ENCODE measurements at regions of chr6 and their contacts with region 1.

Region 1: GRCh38 chr6:117761610-117762009 is 86.3 kb downstream of the NUS1 start:
- DNase-seq: no peak
- ATAC-seq: no peak
- H3K4me3 Mint-ChIP-seq: no peak overlapping the region
- H3K27ac Mint-ChIP-seq: no peak overlapping the region
- H3K4me1 Mint-ChIP-seq: no peaks in the 10 kb centered on the region
- H3K27me3 Mint-ChIP-seq: no peaks in the 10 kb centered on the region
- CTCF ChIP-seq: no peak

Region 2: DNA sequence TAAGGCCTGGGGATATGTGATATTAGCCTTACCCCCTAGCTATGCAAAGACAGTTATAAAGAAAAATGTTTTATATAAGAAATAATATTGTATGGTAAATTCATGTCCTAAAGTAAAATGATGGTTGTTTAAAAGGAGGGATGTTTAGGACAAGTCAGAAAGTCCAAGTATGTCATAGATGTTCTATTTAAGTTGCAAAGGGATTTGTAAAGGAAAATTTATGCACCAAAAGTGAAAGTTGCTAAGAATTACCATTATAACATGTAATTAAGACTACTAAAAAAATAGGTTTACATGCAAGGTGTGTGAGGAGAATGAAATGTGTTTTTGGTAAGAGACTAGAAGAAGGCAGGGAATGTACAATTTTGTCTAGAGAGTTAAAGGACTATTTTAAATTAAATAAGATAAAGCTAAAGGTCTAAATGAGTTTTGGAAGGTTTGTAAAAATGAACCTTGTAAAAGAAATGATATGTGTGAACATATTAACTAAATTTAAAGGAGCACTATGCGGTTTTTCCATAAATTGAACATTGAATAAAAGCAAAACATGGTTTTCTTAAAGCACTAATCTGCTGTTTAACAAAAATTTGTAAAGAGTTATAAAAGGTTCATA is 136.6 kb before region 1 on chr6:
- CTCF ChIA-PET with region 1: no interaction called
- POLR2A ChIA-PET with region 1: no interaction called
- intact Hi-C with region 1: no loop called
- DNase-seq: no peak
- ATAC-seq: no peak
- H3K4me3 Mint-ChIP-seq: no peak overlapping the region
- H3K27ac Mint-ChIP-seq: no peak overlapping the region
- H3K4me1 Mint-ChIP-seq: no peaks in the 10 kb centered on the region
- H3K27me3 Mint-ChIP-seq: peaks cover 9% of the 10 kb centered on the region
- CTCF ChIP-seq: no peak

Region 3: DNA sequence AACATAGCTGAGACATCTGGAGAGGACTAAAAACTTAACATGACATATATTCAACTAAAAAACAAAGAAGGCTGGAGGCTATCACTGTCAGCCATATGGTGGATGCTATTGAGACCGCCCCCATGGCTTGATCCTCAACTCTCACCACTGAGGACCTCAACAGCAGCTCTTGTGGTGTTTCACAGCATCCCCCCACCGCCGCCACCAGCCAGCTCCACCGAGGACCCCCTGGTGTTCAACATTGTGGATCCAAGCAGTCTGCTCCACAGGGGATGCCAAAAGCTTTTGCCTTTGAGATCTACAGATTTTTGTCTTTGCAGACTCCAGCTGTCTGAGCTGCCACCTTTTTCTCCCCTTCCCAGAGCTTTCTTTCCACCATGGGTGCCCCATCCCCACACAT is 21.7 kb before region 1 on chr6:
- CTCF ChIA-PET with region 1: no interaction called
- POLR2A ChIA-PET with region 1: interaction called, 11 read pairs
- intact Hi-C with region 1: no loop called
- DNase-seq: no peak
- ATAC-seq: no peak
- H3K4me3 Mint-ChIP-seq: no peak overlapping the region
- H3K27ac Mint-ChIP-seq: no peak overlapping the region
- H3K4me1 Mint-ChIP-seq: no peaks in the 10 kb centered on the region
- H3K27me3 Mint-ChIP-seq: no peaks in the 10 kb centered on the region
- CTCF ChIP-seq: no peak

Region 4: GRCh38 chr6:118029967-118030366 is 268.4 kb after region 1 on chr6:
- CTCF ChIA-PET with region 1: no interaction called
- POLR2A ChIA-PET with region 1: no interaction called
- intact Hi-C with region 1: no loop called
- DNase-seq: no peak
- ATAC-seq: no peak
- H3K4me3 Mint-ChIP-seq: no peak overlapping the region
- H3K27ac Mint-ChIP-seq: no peak overlapping the region
- H3K4me1 Mint-ChIP-seq: no peaks in the 10 kb centered on the region
- H3K27me3 Mint-ChIP-seq: no peaks in the 10 kb centered on the region
- CTCF ChIP-seq: no peak

Region 5: DNA sequence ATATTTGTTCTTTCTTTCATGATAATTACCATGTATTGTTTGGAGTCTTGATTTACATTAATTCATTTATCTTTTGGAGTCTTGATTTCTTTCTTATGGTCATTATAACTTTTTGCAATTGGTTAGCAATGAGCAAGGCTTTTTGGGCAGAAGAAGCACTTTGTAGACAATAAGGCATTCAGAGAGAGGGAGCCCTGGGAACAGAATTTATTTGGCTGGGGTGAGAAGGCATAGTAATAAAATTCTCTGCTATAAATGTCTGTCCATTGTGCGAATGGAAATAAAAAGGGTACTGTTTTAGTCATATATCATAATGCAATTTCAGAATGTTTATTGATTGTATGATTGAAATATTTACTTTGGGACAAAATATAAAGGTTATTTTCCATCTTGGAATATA is 292.5 kb after region 1 on chr6:
- CTCF ChIA-PET with region 1: no interaction called
- POLR2A ChIA-PET with region 1: no interaction called
- intact Hi-C with region 1: no loop called
- DNase-seq: no peak
- ATAC-seq: no peak
- H3K4me3 Mint-ChIP-seq: no peak overlapping the region
- H3K27ac Mint-ChIP-seq: no peak overlapping the region
- H3K4me1 Mint-ChIP-seq: no peaks in the 10 kb centered on the region
- H3K27me3 Mint-ChIP-seq: no peaks in the 10 kb centered on the region
- CTCF ChIP-seq: no peak

Measured in activated B cell treated with CpG ODN at 0.5 μM for 24 hours (primary cell).